Activated B cell treated with CpG ODN at 0.5 μM for 24 hours (primary cell): ENCODE measurements at regions of chr9 and their contacts with region 1.

Region 1: GRCh38 chr9:136482793-136483588 is at the start of gene SEC16A:
- DNase-seq: peak; percentile 99
- ATAC-seq: peak; percentile 78
- H3K4me3 Mint-ChIP-seq: peak within 1 kb of the TSS; percentile 98
- H3K27ac Mint-ChIP-seq: peak within 1 kb of the TSS; percentile 97
- H3K4me1 Mint-ChIP-seq: peaks cover 34% of the 10 kb centered on the region
- H3K27me3 Mint-ChIP-seq: no peaks in the 10 kb centered on the region
- CTCF ChIP-seq: no peak
- total RNA-seq, gene SEC16A: 74.0 and 78.8 TPM in 2 replicates

Region 2: DNA sequence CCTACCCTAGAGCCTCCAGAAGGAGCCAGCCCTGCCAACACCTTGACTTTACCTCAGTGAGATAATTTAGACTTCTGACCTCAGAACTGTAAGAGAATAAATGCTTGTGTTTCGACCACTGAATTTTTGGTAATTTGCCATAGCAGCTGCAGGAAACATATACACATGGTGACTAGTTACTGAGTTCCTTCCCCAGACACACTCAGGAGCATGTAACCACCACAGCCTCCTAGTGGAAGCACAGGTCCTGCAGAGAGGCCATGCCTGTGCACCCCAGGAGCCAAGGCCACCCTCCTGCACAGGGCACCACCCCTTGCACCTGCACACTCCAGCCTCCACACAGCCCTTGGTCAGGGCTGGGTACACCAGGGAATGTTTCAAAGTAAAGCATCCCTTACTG is 568.1 kb before region 1 on chr9:
- CTCF ChIA-PET with region 1: no interaction called
- POLR2A ChIA-PET with region 1: no interaction called
- intact Hi-C with region 1: no loop called
- DNase-seq: no peak
- ATAC-seq: no peak
- H3K4me3 Mint-ChIP-seq: no peak overlapping the region
- H3K27ac Mint-ChIP-seq: no peak overlapping the region
- H3K4me1 Mint-ChIP-seq: peaks cover 29% of the 10 kb centered on the region
- H3K27me3 Mint-ChIP-seq: no peaks in the 10 kb centered on the region
- CTCF ChIP-seq: no peak

Region 3: GRCh38 chr9:135961277-135961705 is 521.7 kb before region 1 on chr9 and contains the start of gene UBAC1:
- CTCF ChIA-PET with region 1: no interaction called
- POLR2A ChIA-PET with region 1: no interaction called
- intact Hi-C with region 1: loop called (anchors 2 kb)
- DNase-seq: peak; percentile 99
- ATAC-seq: peak; percentile 91
- H3K4me3 Mint-ChIP-seq: peak within 1 kb of the TSS; percentile 87
- H3K27ac Mint-ChIP-seq: peak within 1 kb of the TSS; percentile 76
- H3K4me1 Mint-ChIP-seq: peaks cover 29% of the 10 kb centered on the region
- H3K27me3 Mint-ChIP-seq: peaks cover 9% of the 10 kb centered on the region
- CTCF ChIP-seq: no peak
- total RNA-seq, gene UBAC1: 24.3 and 25.5 TPM in 2 replicates

Region 4: DNA sequence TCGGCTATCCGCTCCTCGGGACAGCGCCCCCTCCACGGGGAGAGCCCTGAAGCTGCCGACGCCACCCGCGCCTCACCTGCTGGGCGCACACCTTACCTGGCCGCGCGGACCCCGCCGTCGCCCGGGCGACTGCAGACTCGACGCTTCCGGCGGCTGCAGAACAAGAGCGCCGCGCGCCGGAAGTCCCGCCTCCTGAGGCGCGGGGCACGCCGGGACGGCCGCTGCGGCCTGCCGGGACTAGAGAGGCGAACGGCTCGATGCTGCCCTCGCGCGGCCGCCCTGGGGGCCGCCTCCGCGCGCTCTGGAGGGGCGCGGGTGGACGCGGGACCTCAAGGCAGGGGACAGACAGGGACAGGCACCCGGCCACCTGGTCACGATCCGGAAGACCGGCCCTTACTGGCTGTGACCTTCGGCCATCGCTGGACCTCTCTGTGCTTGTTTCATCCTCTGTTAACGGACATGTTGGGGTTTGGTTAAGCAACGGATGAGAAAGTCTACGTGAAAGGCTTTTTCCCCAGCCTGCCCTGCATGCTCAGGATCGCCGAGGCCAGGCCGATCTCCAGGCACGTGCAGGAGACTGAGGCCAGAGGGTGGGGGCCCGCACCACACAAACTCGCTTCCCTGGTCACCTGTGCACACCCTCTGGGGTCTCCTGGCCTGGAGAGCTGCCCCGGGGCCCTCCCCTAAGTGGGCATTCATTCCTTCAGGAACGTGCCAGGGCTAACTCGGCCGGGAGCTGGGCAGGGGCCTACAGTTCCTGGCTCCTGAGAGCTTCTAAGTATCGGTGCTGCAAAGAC is 82.8 kb before region 1 on chr9 and contains the start of gene SNAPC4:
- CTCF ChIA-PET with region 1: no interaction called
- POLR2A ChIA-PET with region 1: no interaction called
- intact Hi-C with region 1: loop called (anchors 1 kb)
- DNase-seq: peak; percentile 88
- ATAC-seq: peak; percentile 76
- H3K4me3 Mint-ChIP-seq: peak within 1 kb of the TSS; percentile 87
- H3K27ac Mint-ChIP-seq: peak within 1 kb of the TSS; percentile 46
- H3K4me1 Mint-ChIP-seq: peaks cover 48% of the 10 kb centered on the region
- H3K27me3 Mint-ChIP-seq: no peaks in the 10 kb centered on the region
- CTCF ChIP-seq: peak; percentile 21
- total RNA-seq, gene SNAPC4: 20.0 and 22.2 TPM in 2 replicates

Region 5: DNA sequence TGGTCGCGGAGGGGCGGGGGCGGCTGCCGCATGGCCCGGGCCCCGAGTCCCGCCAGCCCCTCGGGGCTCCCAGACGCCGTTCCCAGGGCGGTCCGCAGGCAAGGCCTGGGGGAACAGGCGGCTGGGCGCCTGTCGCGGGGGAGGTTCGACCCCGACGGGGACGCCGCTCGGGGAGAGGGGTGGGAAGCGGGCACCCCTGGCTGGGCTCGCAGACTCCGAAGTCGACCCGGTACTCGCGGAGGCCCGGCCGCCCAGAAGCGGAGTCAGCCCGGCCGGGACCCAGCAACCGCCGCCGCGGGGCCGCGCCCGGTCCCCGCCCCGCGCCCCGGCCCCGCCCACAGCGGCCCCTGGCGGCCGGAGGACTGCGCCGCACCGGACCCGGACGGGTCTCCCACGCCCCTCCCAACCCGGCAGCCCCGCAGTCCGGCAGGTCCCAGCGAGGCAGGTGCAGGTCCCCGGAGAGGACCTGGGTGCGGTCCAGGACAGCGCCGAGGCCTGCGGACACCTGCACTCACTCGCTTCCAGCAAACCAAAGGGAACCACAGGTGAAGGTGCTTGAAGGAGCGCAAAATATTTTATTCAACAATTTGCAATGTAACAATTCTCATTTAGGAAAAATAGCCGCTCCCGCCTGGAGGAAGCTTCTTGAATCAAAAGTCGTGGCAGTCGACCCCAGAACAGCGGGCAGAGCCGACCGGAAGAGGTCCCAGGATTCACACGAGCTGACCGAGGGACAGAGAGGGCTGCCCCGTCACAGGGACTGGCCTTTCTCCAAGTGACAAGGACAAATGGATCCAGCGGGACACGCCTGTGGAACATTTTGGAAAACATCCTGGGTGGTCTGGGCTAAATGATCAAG is 43.2 kb before region 1 on chr9 and contains the start of gene INPP5E:
- CTCF ChIA-PET with region 1: no interaction called
- POLR2A ChIA-PET with region 1: no interaction called
- intact Hi-C with region 1: loop called (anchors 1 kb)
- DNase-seq: peak; percentile 99
- ATAC-seq: peak; percentile 82
- H3K4me3 Mint-ChIP-seq: peak within 1 kb of the TSS; percentile 84
- H3K27ac Mint-ChIP-seq: peak within 1 kb of the TSS; percentile 53
- H3K4me1 Mint-ChIP-seq: peaks cover 26% of the 10 kb centered on the region
- H3K27me3 Mint-ChIP-seq: no peaks in the 10 kb centered on the region
- CTCF ChIP-seq: no peak
- total RNA-seq, gene INPP5E: 22.8 and 26.6 TPM in 2 replicates

Region 6: GRCh38 chr9:136631038-136632000 is 148.3 kb after region 1 on chr9:
- CTCF ChIA-PET with region 1: interaction called, 44 read pairs
- POLR2A ChIA-PET with region 1: interaction called, 4 read pairs
- intact Hi-C with region 1: loop called (anchors 1 kb)
- DNase-seq: peak; percentile 74
- ATAC-seq: peak; percentile 93
- H3K4me3 Mint-ChIP-seq: no peak overlapping the region
- H3K27ac Mint-ChIP-seq: no peak overlapping the region
- H3K4me1 Mint-ChIP-seq: no peaks in the 10 kb centered on the region
- H3K27me3 Mint-ChIP-seq: peaks cover 14% of the 10 kb centered on the region
- CTCF ChIP-seq: no peak

Region 7: DNA sequence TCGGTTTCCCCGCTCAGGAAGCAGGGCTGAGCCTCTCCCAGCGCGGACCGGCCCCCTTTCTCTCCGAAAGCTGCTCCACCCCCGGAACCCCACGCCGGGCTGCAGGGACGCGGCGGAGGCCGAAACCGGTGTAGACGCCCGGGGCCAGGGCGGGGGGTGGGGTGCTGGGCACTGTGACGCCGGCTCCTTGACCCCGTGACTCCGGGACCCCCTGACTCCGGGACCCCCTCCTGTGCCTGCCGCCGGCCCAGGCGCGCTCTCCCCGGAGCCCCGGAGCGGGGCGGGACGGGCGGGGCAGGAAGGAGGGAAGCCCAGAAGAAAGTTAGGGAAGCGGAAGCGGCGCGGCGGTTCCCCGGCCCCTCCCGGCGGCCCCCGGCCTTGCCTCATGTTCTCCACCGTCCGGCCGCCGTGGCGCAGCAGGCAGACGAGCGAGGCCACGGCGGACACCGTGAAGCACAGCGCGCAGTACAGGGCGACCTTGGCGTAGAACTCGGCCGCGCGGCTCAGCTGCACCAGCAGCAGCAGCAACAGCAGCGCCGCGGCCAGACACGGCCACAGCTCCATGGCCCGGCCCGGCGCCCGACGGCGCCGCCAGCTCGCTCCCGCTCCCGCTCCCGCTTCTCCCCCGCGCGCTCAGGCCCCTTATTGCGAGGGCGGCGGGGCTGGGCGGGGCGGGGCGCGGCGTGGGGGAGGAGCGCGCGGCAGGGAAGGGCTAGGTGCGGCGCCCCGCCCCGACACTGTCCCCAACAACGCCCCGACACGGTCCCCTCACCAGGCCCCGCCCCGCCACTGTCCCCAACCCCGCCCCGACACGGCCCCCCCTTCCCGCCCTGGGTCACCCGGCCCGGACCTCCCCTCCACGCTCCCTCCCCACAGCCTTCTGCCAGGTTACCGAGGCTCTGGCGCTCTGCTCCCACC is 204.1 kb after region 1 on chr9 and contains the start of gene AGPAT2:
- CTCF ChIA-PET with region 1: no interaction called
- POLR2A ChIA-PET with region 1: interaction called, 3 read pairs
- intact Hi-C with region 1: loop called (anchors 5 kb)
- DNase-seq: peak; percentile 64
- ATAC-seq: peak; percentile 94
- H3K4me3 Mint-ChIP-seq: peak within 1 kb of the TSS; percentile 78
- H3K27ac Mint-ChIP-seq: peak within 1 kb of the TSS; percentile 59
- H3K4me1 Mint-ChIP-seq: peaks cover 10% of the 10 kb centered on the region
- H3K27me3 Mint-ChIP-seq: no peaks in the 10 kb centered on the region
- CTCF ChIP-seq: no peak
- total RNA-seq, gene AGPAT2: 16.6 and 17.1 TPM in 2 replicates